ENCODE measurements at regions of chr5 and their contacts with region 1.

Region 1: GRCh38 chr5:128201065-128201926 is 117.7 kb downstream of the SLC12A2 start:
- DNase-seq: peak; percentile 73
- H3K4me3 ChIP-seq: no peak overlapping the region
- H3K27ac ChIP-seq: no peak overlapping the region
- H3K4me1 ChIP-seq: no peaks in the 10 kb centered on the region
- CTCF ChIP-seq: peak; percentile 93

Region 2: GRCh38 chr5:127564002-127564769 is 637.1 kb before region 1 on chr5:
- CTCF ChIA-PET with region 1: no interaction called
- POLR2A ChIA-PET with region 1: no interaction called
- intact Hi-C with region 1: loop called (anchors 2 kb)
- DNase-seq: peak; percentile 70
- H3K4me3 ChIP-seq: no peak overlapping the region
- H3K27ac ChIP-seq: no peak overlapping the region
- H3K4me1 ChIP-seq: no peaks in the 10 kb centered on the region
- CTCF ChIP-seq: peak; percentile 91

Region 3: DNA sequence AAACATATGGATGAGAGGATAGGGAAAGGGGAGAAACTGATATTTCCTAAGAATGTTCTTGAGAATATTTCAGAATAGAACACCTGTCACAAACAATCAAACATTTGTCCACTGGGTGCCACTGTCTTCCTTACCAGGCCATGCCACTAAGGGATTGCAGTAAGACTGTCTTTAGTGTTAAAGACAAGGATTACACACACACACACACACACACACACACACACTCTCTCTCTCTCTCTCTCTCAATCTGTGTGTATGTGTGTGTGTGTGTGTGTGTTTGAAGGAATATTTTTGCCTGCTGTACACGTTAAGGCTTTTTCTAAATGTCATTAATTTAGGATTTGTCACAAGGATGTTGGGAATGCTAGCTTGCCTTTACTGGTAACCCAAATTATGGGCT is 443.7 kb before region 1 on chr5:
- CTCF ChIA-PET with region 1: no interaction called
- POLR2A ChIA-PET with region 1: no interaction called
- intact Hi-C with region 1: loop called (anchors 2 kb)
- DNase-seq: peak; percentile 10
- H3K4me3 ChIP-seq: no peak overlapping the region
- H3K27ac ChIP-seq: no peak overlapping the region
- H3K4me1 ChIP-seq: no peaks in the 10 kb centered on the region
- CTCF ChIP-seq: peak; percentile 53

Region 4: GRCh38 chr5:127875235-127876021 is 325.9 kb before region 1 on chr5:
- CTCF ChIA-PET with region 1: no interaction called
- POLR2A ChIA-PET with region 1: no interaction called
- intact Hi-C with region 1: loop called (anchors 1 kb)
- DNase-seq: peak; percentile 60
- H3K4me3 ChIP-seq: no peak overlapping the region
- H3K27ac ChIP-seq: no peak overlapping the region
- H3K4me1 ChIP-seq: no peaks in the 10 kb centered on the region
- CTCF ChIP-seq: peak; percentile 68

Region 5: DNA sequence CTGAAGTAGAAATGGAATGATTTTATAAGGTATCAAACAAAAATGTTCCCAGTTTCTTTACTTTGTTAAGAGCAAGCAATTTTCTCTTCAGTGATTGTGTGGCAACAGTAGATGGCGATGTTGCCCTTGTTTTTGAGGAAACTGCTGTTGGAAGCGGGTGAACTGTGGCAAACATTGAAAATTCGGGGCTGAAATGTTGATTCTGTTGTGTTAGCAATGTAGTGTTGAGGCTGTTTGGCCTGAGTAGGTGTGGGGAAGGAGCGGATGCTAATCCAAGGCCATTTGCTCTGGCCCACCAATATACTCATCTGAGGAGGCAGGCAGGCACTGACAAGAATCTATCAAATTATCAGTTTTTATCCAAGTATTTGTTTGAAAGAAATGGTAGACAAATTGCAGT is 12.0 kb after region 1 on chr5:
- CTCF ChIA-PET with region 1: no interaction called
- POLR2A ChIA-PET with region 1: no interaction called
- intact Hi-C with region 1: no loop called
- DNase-seq: peak; percentile 56
- H3K4me3 ChIP-seq: no peak overlapping the region
- H3K27ac ChIP-seq: no peak overlapping the region
- H3K4me1 ChIP-seq: no peaks in the 10 kb centered on the region
- CTCF ChIP-seq: peak; percentile 85

Region 6: DNA sequence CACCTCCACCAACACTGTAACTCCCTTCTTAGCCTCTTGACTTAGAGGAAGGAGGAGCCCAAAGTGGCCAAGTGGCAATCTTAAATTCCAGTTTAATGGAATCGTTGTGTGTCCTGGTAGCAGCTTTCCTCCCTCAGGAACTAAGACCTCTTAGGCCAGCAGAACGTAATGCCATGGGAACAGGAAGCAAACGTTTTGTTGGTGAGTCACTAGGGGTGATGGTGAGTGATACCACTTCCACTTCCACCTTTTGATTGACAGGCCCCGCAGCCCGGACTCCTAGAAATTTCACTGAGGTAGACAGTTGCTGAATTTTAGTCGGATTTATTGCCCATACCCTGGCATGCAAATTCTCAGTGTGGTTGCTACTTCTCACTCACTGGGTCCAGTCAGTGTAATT is 431.0 kb after region 1 on chr5:
- CTCF ChIA-PET with region 1: no interaction called
- POLR2A ChIA-PET with region 1: no interaction called
- intact Hi-C with region 1: no loop called
- DNase-seq: no peak
- H3K4me3 ChIP-seq: no peak overlapping the region
- H3K27ac ChIP-seq: no peak overlapping the region
- H3K4me1 ChIP-seq: no peaks in the 10 kb centered on the region
- CTCF ChIP-seq: no peak

Measured in OCI-LY7 (cell line).